ENCODE measurements at regions of chr13 and their contacts with region 1.

Region 1: GRCh38 chr13:19782049-19782726 is 557 bp downstream of the PSPC1 start:
- DNase-seq: peak; percentile 78

Region 2: DNA sequence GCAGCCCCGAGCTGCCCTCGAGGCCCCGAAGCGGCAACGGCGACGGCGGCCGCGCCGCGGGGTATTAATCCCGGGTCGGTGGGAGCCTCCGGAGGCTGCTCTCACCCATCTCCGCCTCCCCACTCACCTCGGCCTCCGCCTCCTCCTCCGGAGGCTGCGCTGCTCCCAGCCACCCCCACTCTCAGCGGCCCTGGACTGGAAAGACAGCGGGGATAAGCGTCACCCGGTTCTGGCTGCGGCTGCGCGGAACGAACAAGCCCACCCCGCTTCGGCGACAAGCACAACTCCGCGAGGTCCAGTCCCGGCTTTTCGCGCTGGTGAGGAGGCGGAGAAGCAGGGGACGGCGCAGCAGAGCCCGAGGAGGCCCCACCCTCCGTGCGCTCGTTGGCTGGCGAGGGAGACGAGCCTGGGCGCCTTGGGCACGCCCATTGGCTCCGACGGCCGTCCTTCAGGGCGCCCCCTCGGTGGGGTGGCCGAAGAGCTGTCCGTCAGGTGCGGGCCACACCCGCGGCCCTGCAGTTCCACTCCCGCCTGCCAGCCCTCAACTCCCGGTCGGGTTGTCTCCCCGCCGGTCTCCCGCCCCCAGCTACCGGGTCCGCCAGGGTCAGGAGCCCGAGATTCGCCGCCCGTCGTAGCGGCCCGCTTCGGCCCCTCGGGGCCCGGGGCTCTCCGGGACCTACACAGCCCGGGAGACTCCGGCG is 81.3 kb after region 1 on chr13 and contains the start of gene ZMYM5:
- intact Hi-C with region 1: loop called (anchors 2 kb)
- DNase-seq: peak; percentile 99
- total RNA-seq, gene ZMYM5: 8.3 TPM